Activated CD4-positive, alpha-beta T cell treated with anti-CD3 and anti-CD28 coated beads for 36 hours (primary cell): ENCODE measurements at regions of chrX and their contacts with region 1.

Region 1: DNA sequence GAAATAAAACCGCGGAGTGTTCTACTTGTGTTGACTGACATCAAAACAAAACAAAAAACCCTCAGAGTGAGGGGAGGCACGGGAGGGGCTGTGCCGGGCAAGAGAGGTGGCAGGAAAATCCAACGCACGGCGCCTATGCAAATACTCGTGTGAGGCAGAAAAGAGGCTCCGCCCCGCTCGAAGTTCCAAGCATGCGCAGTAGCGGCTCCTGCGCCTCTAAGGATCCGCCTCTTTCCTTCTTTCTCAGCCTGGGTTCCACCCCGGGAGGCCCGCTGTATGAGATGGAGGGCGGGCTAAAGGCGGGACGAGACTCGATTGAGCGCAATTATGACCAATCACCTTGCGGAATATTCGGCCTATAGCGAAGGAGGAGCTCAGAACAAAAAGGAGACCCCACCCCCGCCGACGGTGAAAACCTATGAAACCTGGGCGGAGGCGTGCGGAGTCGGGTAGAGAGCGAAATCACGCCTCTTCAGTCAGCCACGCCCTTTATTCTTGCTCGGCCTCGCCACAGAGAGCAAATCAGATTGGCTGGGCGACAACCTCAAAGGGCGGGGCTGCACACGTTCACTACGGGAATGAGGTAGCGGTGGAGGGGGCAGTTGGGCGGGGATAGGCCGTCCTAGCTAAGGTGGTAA is 720 bp upstream of the CDK16 start:
- DNase-seq: peak; percentile 96
- ATAC-seq: peak; percentile 87
- H3K4me3 Mint-ChIP-seq: peak overlapping the region; percentile 92
- H3K27ac Mint-ChIP-seq: peak overlapping the region; percentile 99
- H3K4me1 Mint-ChIP-seq: peaks cover 35% of the 10 kb centered on the region
- H3K27me3 Mint-ChIP-seq: no peaks in the 10 kb centered on the region

Region 2: DNA sequence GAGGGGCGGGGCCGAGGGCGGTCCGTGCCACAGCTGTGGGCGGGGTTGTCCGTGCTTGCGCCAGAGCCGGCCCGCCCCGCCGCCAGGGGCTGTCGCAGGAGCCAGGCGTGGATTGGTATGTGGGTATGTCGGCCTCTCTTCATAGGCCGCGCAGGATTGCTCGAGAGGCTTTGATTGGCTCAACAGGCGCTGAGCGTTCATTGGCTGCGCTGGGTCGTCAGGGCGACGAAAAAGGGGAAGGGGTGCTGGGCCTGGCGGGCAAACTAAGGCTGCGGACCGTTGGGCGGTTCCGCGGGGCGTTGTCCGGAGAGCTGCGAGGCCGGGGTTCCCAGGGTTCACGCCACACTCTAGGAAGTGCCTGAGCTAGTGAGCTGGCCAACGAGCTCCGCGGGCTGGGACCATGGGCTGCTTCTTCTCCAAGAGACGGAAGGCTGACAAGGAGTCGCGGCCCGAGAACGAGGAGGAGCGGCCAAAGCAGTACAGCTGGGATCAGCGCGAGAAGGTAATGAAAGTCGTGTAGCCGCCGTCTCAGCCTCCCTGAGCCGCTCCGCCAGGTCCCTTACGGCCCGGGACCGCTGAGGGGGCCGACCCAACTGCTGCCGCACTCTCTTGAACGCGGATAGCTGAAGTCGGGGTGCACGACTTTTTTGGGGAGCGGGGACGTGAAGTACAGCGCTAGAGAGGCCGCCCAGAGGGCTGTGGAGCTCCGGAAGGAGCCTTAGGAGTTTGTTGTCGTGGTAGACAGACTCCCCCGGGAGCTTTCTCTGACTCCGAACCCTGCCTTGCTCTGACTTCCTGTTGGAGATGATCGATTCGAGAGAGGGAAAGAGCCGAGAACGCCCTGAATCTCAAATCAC is 380.8 kb before region 1 on chrX and contains the start of gene RP2:
- CTCF ChIA-PET with region 1: no interaction called
- POLR2A ChIA-PET with region 1: no interaction called
- intact Hi-C with region 1: loop called in 1 of 2 experiments (anchors 5 kb)
- DNase-seq: peak; percentile 90
- ATAC-seq: peak; percentile 96
- H3K4me3 Mint-ChIP-seq: peak within 1 kb of the TSS; percentile 95
- H3K27ac Mint-ChIP-seq: peak within 1 kb of the TSS; percentile 86
- H3K4me1 Mint-ChIP-seq: peaks cover 5% of the 10 kb centered on the region
- H3K27me3 Mint-ChIP-seq: no peaks in the 10 kb centered on the region
- total RNA-seq, gene RP2: 3.3 to 5.0 TPM

Region 3: DNA sequence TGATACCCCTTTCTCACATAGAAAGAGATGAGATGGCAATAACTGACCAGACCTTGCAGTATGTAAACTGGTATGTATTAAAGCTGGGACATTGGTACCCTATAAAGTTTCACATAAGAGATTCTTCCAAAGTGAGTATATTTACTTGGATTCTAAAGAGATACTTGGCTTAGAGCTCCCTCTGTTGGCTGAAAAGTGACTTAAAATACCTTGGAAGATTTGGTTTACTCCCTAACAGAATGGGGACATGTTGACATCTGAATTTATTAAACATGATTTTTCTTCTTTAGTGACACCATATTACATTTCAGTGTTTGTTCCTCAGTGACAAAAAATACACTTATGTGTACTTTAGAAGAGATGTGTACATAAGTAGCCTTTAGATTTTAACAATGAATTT is 187.4 kb before region 1 on chrX:
- CTCF ChIA-PET with region 1: no interaction called
- POLR2A ChIA-PET with region 1: no interaction called
- intact Hi-C with region 1: no loop called
- DNase-seq: peak; percentile 3
- ATAC-seq: no peak
- H3K4me3 Mint-ChIP-seq: no peak overlapping the region
- H3K27ac Mint-ChIP-seq: no peak overlapping the region
- H3K4me1 Mint-ChIP-seq: no peaks in the 10 kb centered on the region
- H3K27me3 Mint-ChIP-seq: no peaks in the 10 kb centered on the region

Region 4: GRCh38 chrX:47233337-47234113 is 15.8 kb after region 1 on chrX:
- CTCF ChIA-PET with region 1: interaction called, 3 read pairs
- POLR2A ChIA-PET with region 1: interaction called, 15 read pairs
- intact Hi-C with region 1: loop called (anchors 1 kb)
- DNase-seq: peak; percentile 96
- ATAC-seq: peak; percentile 89
- H3K4me3 Mint-ChIP-seq: peak overlapping the region; percentile 77
- H3K27ac Mint-ChIP-seq: peak overlapping the region; percentile 95
- H3K4me1 Mint-ChIP-seq: peaks cover 23% of the 10 kb centered on the region
- H3K27me3 Mint-ChIP-seq: no peaks in the 10 kb centered on the region

Region 5: GRCh38 chrX:47366028-47366722 is 148.4 kb after region 1 on chrX:
- CTCF ChIA-PET with region 1: no interaction called
- POLR2A ChIA-PET with region 1: interaction called, 3 read pairs
- intact Hi-C with region 1: loop called in 1 of 2 experiments (anchors 5 kb)
- DNase-seq: peak; percentile 80
- ATAC-seq: peak; percentile 94
- H3K4me3 Mint-ChIP-seq: peak overlapping the region; percentile 80
- H3K27ac Mint-ChIP-seq: peak overlapping the region; percentile 93
- H3K4me1 Mint-ChIP-seq: peaks cover 15% of the 10 kb centered on the region
- H3K27me3 Mint-ChIP-seq: no peaks in the 10 kb centered on the region

Region 6: GRCh38 chrX:47482512-47483309 is 264.9 kb after region 1 on chrX and contains the start of gene ZNF41:
- CTCF ChIA-PET with region 1: no interaction called
- POLR2A ChIA-PET with region 1: no interaction called
- intact Hi-C with region 1: loop called in 1 of 2 experiments (anchors 1 kb)
- DNase-seq: peak; percentile 86
- ATAC-seq: peak; percentile 90
- H3K4me3 Mint-ChIP-seq: peak within 1 kb of the TSS; percentile 97
- H3K27ac Mint-ChIP-seq: peak within 1 kb of the TSS; percentile 94
- H3K4me1 Mint-ChIP-seq: peaks cover 41% of the 10 kb centered on the region
- H3K27me3 Mint-ChIP-seq: no peaks in the 10 kb centered on the region
- total RNA-seq, gene ZNF41: 9.3 to 10.9 TPM

Region 7: GRCh38 chrX:47650164-47651042 is 432.6 kb after region 1 on chrX and contains the start of gene ELK1:
- CTCF ChIA-PET with region 1: no interaction called
- POLR2A ChIA-PET with region 1: no interaction called
- intact Hi-C with region 1: loop called in 1 of 2 experiments (anchors 5 kb)
- DNase-seq: peak; percentile 93
- ATAC-seq: peak; percentile 95
- H3K4me3 Mint-ChIP-seq: peak within 1 kb of the TSS; percentile 92
- H3K27ac Mint-ChIP-seq: peak within 1 kb of the TSS; percentile 97
- H3K4me1 Mint-ChIP-seq: peaks cover 44% of the 10 kb centered on the region
- H3K27me3 Mint-ChIP-seq: no peaks in the 10 kb centered on the region
- total RNA-seq, gene ELK1: 96.8 to 117 TPM